Endothelial cell of umbilical vein (primary cell): ENCODE measurements at regions of chr14 and their contacts with region 1.

Region 1: DNA sequence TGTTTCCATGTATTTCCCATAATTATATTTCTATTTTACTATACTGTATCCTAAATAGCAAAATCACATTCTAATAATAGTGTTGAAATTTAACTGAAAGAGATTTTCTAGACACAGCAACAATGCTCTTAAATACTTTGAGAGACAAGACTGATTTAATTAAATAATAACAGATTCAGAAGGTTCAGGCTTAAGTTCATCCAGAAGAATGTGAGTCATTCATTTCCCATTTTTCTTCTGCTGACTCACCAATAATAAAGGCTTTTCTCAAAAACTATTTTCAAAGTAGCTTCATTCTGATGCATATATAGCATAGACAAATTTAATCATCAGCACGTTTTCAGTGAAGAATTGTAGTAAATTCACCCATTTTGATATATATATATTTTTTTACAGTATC is 481.4 kb downstream of the MDGA2 start:
- DNase-seq: peak; percentile 69
- H3K4me3 ChIP-seq: no peak overlapping the region
- H3K27ac ChIP-seq: peak overlapping the region; percentile 23
- H3K4me1 ChIP-seq: peaks cover 16% of the 10 kb centered on the region
- H3K27me3 ChIP-seq: no peaks in the 10 kb centered on the region
- CTCF ChIP-seq: no peak
- POLR2A ChIP-seq: no peak

Region 2: DNA sequence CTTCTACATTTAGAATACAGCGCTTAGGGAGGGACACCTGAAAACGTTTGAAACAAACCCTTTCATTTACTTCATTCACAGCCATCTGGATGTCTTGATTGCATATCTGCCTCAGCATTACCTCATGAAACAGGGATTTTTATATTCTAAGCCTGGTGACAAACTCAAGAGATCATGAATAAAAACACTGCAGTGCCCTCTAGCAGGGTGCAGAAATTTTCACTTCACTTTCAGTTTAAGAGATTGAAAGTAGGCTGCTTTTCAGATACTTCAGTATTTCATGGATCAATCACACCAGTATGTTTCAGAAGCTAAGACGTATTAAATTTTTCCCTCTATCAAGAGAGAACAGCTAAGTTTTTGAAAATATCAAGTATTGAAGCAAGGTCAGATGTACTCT is 13.6 kb after region 1 on chr14:
- CTCF ChIA-PET with region 1: interaction called, 14 read pairs
- POLR2A ChIA-PET with region 1: no interaction called
- dilution Hi-C with region 1: no loop called
- intact Hi-C with region 1: no loop called
- DNase-seq: peak; percentile 59
- H3K4me3 ChIP-seq: no peak overlapping the region
- H3K27ac ChIP-seq: no peak overlapping the region
- H3K4me1 ChIP-seq: peaks cover 10% of the 10 kb centered on the region
- H3K27me3 ChIP-seq: no peaks in the 10 kb centered on the region
- CTCF ChIP-seq: peak in 1 of 2 donors; percentile 9
- POLR2A ChIP-seq: no peak

Region 3: DNA sequence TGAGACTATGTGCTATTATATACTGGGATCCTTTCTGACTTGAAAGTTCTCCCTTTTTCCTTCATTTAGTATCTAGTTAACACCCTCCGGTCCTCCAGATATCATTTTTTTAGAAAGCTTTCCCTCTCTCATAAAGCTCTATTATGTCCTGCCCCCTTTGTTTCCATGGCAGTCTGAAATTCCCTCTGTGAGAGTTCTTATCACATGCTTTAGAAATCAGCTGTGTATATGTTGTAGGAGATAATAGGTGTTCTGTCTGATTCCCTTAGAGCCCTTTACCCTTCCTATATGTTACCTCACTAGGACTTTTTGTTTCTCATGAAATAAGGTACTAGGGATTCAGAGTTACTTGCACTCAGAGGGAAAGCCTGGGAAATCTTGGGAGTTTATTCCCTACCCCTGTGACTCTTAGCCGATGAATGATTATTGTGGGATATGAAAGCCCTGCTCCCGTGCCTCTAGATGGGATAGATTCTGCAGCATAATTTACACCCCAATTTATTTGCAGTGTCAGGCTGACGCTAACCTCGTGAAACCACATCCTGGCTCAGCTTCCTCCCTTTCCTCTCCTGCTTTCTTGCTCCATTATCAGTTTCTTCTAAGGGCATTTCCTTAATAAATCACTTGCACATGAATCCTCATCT is 32.9 kb after region 1 on chr14:
- CTCF ChIA-PET with region 1: interaction called, 4 read pairs
- POLR2A ChIA-PET with region 1: no interaction called
- dilution Hi-C with region 1: no loop called
- intact Hi-C with region 1: loop called (anchors 2 kb)
- DNase-seq: peak; percentile 85
- H3K4me3 ChIP-seq: peak overlapping the region in 1 of 3 experiments; percentile 13
- H3K27ac ChIP-seq: peak overlapping the region; percentile 69
- H3K4me1 ChIP-seq: peaks cover 35% of the 10 kb centered on the region
- H3K27me3 ChIP-seq: no peaks in the 10 kb centered on the region
- CTCF ChIP-seq: no peak
- POLR2A ChIP-seq: no peak